Endothelial cell of umbilical vein (primary cell): ENCODE measurements at regions of chr1 and their contacts with region 1.

Region 1: GRCh38 chr1:64966158-64966971 is at the start of gene JAK1:
- DNase-seq: peak; percentile 76
- H3K4me3 ChIP-seq: peak within 1 kb of the TSS; percentile 79 to 94 (median 85)
- H3K27ac ChIP-seq: peak within 1 kb of the TSS; percentile 92
- H3K4me1 ChIP-seq: peaks cover 34% of the 10 kb centered on the region
- H3K27me3 ChIP-seq: no peaks in the 10 kb centered on the region
- CTCF ChIP-seq: no peak
- POLR2A ChIP-seq: peak; percentile 97
- total RNA-seq, gene JAK1: 152 and 177 TPM in 2 replicates

Region 2: GRCh38 chr1:64268653-64269557 is 697.5 kb before region 1 on chr1:
- CTCF ChIA-PET with region 1: no interaction called
- POLR2A ChIA-PET with region 1: no interaction called
- dilution Hi-C with region 1: no loop called
- intact Hi-C with region 1: loop called (anchors 10 kb)
- DNase-seq: peak; percentile 76
- H3K4me3 ChIP-seq: no peak overlapping the region
- H3K27ac ChIP-seq: no peak overlapping the region
- H3K4me1 ChIP-seq: peaks cover under 1% of the 10 kb centered on the region
- H3K27me3 ChIP-seq: peaks cover 0 to 5% of the 10 kb centered on the region in 2 experiments
- CTCF ChIP-seq: peak; percentile 49 to 58
- POLR2A ChIP-seq: no peak

Region 3: GRCh38 chr1:64744492-64745180 is 221.7 kb before region 1 on chr1 and contains the start of gene RAVER2:
- CTCF ChIA-PET with region 1: no interaction called
- POLR2A ChIA-PET with region 1: no interaction called
- dilution Hi-C with region 1: no loop called
- intact Hi-C with region 1: loop called (anchors 1 kb)
- DNase-seq: peak; percentile 56
- H3K4me3 ChIP-seq: peak within 1 kb of the TSS; percentile 61 to 89 (median 71)
- H3K27ac ChIP-seq: peak within 1 kb of the TSS; percentile 26
- H3K4me1 ChIP-seq: peaks cover 6% of the 10 kb centered on the region
- H3K27me3 ChIP-seq: no peaks in the 10 kb centered on the region
- CTCF ChIP-seq: peak; percentile 40 to 54
- POLR2A ChIP-seq: peak; percentile 37
- total RNA-seq, gene RAVER2: 10.3 and 13.9 TPM in 2 replicates

Region 4: GRCh38 chr1:64864018-64864940 is 102.1 kb before region 1 on chr1:
- CTCF ChIA-PET with region 1: interaction called, 11 read pairs
- POLR2A ChIA-PET with region 1: interaction called, 5 read pairs
- dilution Hi-C with region 1: no loop called
- intact Hi-C with region 1: loop called (anchors 2 kb)
- DNase-seq: peak; percentile 90
- H3K4me3 ChIP-seq: no peak overlapping the region
- H3K27ac ChIP-seq: peak overlapping the region; percentile 68
- H3K4me1 ChIP-seq: peaks cover 31% of the 10 kb centered on the region
- H3K27me3 ChIP-seq: no peaks in the 10 kb centered on the region
- CTCF ChIP-seq: no peak
- POLR2A ChIP-seq: peak; percentile 52

Region 5: DNA sequence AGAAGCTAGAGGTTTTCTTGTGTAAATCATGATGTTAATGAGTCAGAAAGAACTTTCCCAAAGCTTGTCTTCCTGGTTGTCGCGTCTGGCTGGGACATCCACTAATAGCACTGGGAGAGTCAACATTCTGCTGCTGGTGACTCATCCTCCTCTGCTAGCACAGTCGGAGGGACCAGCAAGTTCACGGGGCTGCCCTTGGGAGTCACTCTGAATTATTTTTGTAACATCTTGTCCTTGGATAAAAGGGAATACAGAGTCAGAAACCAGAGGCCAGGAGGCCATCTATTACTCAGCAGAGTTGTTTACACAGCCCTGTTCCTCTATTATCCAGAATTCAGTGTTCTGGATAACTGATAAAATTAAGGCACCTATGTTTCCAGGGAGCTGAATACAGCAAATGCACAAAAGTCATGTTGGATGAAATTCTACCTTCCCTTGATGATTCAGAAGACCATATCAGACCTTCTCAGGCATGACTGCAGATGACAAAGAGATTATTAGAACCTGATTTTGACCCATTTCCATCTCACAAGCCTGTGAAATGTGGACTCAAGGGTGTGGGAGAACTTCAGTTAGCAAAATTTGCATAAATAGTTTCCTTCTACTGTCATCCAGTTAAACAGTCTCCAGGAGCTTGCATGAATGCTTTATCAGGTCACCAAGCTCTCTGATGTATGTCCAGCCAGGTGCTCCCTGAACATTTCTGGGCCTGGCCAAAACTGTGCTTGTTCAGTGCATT is 68.1 kb before region 1 on chr1:
- CTCF ChIA-PET with region 1: interaction called, 7 read pairs
- POLR2A ChIA-PET with region 1: no interaction called
- dilution Hi-C with region 1: no loop called
- intact Hi-C with region 1: loop called (anchors 1 kb)
- DNase-seq: peak; percentile 98
- H3K4me3 ChIP-seq: peak overlapping the region in 1 of 3 experiments; percentile 32
- H3K27ac ChIP-seq: peak overlapping the region; percentile 97
- H3K4me1 ChIP-seq: peaks cover 42% of the 10 kb centered on the region
- H3K27me3 ChIP-seq: no peaks in the 10 kb centered on the region
- CTCF ChIP-seq: no peak
- POLR2A ChIP-seq: peak; percentile 55

Region 6: GRCh38 chr1:64933296-64934070 is 32.9 kb before region 1 on chr1:
- CTCF ChIA-PET with region 1: interaction called, 3 read pairs
- POLR2A ChIA-PET with region 1: no interaction called
- dilution Hi-C with region 1: no loop called
- intact Hi-C with region 1: loop called (anchors 1 kb)
- DNase-seq: peak; percentile 31
- H3K4me3 ChIP-seq: no peak overlapping the region
- H3K27ac ChIP-seq: peak overlapping the region; percentile 82
- H3K4me1 ChIP-seq: peaks cover 25% of the 10 kb centered on the region
- H3K27me3 ChIP-seq: no peaks in the 10 kb centered on the region
- CTCF ChIP-seq: no peak
- POLR2A ChIP-seq: no peak

Region 7: GRCh38 chr1:65027666-65028358 is 61.4 kb after region 1 on chr1:
- CTCF ChIA-PET with region 1: no interaction called
- POLR2A ChIA-PET with region 1: no interaction called
- dilution Hi-C with region 1: no loop called
- intact Hi-C with region 1: no loop called
- DNase-seq: peak; percentile 66
- H3K4me3 ChIP-seq: no peak overlapping the region
- H3K27ac ChIP-seq: no peak overlapping the region
- H3K4me1 ChIP-seq: peaks cover 8% of the 10 kb centered on the region
- H3K27me3 ChIP-seq: no peaks in the 10 kb centered on the region
- CTCF ChIP-seq: no peak
- POLR2A ChIP-seq: no peak

Region 8: GRCh38 chr1:65067491-65068201 is 101.3 kb after region 1 on chr1:
- CTCF ChIA-PET with region 1: interaction called, 3 read pairs
- POLR2A ChIA-PET with region 1: interaction called, 3 read pairs
- dilution Hi-C with region 1: no loop called
- intact Hi-C with region 1: loop called (anchors 2 kb)
- DNase-seq: peak; percentile 84
- H3K4me3 ChIP-seq: peak overlapping the region; percentile 48 to 88 (median 85)
- H3K27ac ChIP-seq: peak overlapping the region; percentile 82
- H3K4me1 ChIP-seq: peaks cover 14% of the 10 kb centered on the region
- H3K27me3 ChIP-seq: no peaks in the 10 kb centered on the region
- CTCF ChIP-seq: no peak
- POLR2A ChIP-seq: no peak